ENCODE measurements at regions of chr14 and their contacts with region 1.

Region 1: DNA sequence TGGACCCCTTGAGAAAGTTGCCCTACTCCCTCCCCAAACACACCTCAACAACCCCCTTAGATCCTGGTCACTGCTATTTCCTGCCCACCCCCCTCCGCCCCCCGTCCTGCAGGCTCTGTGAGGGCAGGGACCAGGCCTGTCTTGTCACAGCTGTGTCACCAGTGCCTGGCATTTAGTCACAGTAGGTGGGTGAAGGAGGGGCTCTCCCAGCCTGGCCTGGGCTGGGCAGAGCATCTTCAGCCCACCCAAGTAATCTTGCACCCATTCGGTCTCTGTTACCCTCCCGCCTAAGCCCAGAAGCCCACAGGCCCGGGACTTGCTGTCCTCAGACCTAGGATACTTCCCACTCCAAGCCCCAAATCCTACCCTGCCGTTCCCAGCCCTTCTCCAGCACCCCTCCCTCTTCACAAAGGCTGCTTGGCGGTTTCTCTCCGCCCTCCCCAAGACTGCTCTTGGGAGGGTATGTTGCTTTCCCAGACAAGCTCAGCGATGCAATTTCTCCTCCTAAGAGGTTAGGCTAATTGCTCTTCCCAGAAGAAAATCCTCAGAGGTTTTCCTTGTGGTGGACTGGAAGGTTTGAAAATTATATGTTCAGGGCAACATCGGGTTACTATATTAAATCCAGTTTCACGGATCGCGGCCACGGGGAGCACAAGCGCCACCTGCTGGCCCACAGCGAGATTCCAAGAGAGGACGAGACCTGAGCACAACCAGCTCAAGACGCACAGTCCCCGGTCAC is 50.8 kb upstream of the ZFP36L1 start:
- DNase-seq: peak; percentile 48 to 78 (median 65)
- H3K4me3 ChIP-seq: no peak overlapping the region
- H3K4me3 Mint-ChIP-seq: peak overlapping the region in 5 of 7 donors; percentile 4 to 90 (median 69)
- H3K27ac ChIP-seq: no peak overlapping the region
- H3K27ac Mint-ChIP-seq: peak overlapping the region in 3 of 8 donors; percentile 29 to 83 (median 68)
- H3K4me1 ChIP-seq: peaks cover 9% of the 10 kb centered on the region
- H3K4me1 Mint-ChIP-seq: peaks cover 31 to 40% (median 31%) of the 10 kb centered on the region in 3 donors
- H3K27me3 ChIP-seq: no peaks in the 10 kb centered on the region
- H3K27me3 Mint-ChIP-seq: peaks cover 3 to 8% of the 10 kb centered on the region in 2 donors

Region 2: DNA sequence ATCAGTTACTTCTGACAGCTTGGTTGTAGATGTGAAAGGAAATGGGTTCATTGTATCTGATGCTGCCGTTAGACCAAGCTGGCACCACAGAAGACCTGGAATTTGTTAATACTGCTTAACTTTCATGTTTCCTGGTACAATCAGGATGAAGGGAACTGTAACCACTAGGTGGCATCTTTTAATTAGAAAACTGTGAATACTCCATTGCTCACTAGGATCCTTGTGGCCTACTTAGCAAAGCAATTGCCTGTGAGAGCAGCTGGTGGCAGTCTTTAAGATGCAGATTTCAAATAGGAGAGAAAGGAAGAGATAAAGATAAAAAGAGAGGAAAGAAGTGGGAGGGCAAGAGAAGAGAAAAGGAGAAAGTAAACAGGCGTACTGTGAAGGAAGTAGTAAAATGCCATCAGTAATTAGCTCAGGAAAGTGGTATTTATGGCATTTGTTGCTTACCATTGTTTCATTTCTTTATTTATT is 909.6 kb before region 1 on chr14:
- CTCF ChIA-PET with region 1: interaction called, 10 read pairs
- POLR2A ChIA-PET with region 1: no interaction called
- DNase-seq: peak in 2 of 5 donors; percentile 29 to 33
- H3K4me3 ChIP-seq: no peak overlapping the region
- H3K4me3 Mint-ChIP-seq: no peak overlapping the region
- H3K27ac ChIP-seq: no peak overlapping the region
- H3K27ac Mint-ChIP-seq: peak overlapping the region in 1 of 8 donors; percentile 18
- H3K4me1 ChIP-seq: peaks cover 6% of the 10 kb centered on the region
- H3K4me1 Mint-ChIP-seq: peaks cover 4 to 5% (median 5%) of the 10 kb centered on the region in 3 donors
- H3K27me3 ChIP-seq: no peaks in the 10 kb centered on the region
- H3K27me3 Mint-ChIP-seq: peaks cover 0 to 1% of the 10 kb centered on the region in 2 donors

Region 3: GRCh38 chr14:68248481-68249255 is 595.0 kb before region 1 on chr14:
- CTCF ChIA-PET with region 1: interaction called, 19 read pairs
- POLR2A ChIA-PET with region 1: no interaction called
- DNase-seq: peak in 2 of 5 donors; percentile 39 to 57
- H3K4me3 ChIP-seq: no peak overlapping the region
- H3K4me3 Mint-ChIP-seq: no peak overlapping the region
- H3K27ac ChIP-seq: no peak overlapping the region
- H3K27ac Mint-ChIP-seq: peak overlapping the region in 3 of 8 donors; percentile 15 to 60 (median 52)
- H3K4me1 ChIP-seq: peaks cover 12% of the 10 kb centered on the region
- H3K4me1 Mint-ChIP-seq: peaks cover 8 to 17% (median 14%) of the 10 kb centered on the region in 3 donors
- H3K27me3 ChIP-seq: no peaks in the 10 kb centered on the region
- H3K27me3 Mint-ChIP-seq: no peaks in the 10 kb centered on the region

Region 4: DNA sequence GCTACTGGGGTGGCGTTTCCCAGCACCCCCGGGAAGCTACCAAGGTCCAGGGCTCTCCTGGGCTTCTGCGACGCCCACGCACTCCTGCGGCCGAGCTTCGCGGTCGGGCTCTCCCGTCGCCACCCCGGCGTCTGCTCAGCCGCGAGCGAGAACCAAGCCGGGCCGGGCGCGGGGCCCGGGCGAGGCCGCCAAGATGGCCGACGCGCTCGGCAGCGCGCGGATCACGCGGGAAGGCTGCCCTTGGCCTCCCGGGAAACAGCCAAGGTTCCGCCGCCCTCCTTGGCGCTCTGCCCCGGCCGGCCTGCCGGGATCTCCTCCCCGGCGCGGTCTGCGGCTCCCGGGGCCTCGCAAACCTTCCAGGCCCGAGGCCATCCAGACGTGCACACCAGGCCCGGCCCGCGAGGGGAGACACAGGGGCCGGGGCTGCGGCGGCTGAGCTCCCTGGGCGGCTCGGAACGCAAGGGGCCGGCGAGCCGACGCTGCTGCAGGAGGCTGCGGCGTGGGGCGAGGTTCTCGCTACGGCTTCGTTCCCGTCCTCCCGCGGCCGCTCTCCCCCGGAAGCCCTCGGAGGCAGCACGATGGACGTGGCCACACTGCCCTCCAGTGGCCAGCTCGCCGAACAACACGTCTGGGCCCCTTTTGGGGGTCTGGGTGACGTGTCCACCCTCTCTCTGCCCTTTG is 27.2 kb before region 1 on chr14:
- CTCF ChIA-PET with region 1: interaction called, 23 read pairs
- POLR2A ChIA-PET with region 1: no interaction called
- DNase-seq: peak; percentile 83 to 92 (median 86)
- H3K4me3 ChIP-seq: peak overlapping the region; percentile 79
- H3K4me3 Mint-ChIP-seq: peak overlapping the region; percentile 76 to 94 (median 82)
- H3K27ac ChIP-seq: peak overlapping the region; percentile 86
- H3K27ac Mint-ChIP-seq: peak overlapping the region; percentile 90 to 100 (median 96)
- H3K4me1 ChIP-seq: peaks cover 73% of the 10 kb centered on the region
- H3K4me1 Mint-ChIP-seq: peaks cover 68 to 76% (median 73%) of the 10 kb centered on the region in 3 donors
- H3K27me3 ChIP-seq: no peaks in the 10 kb centered on the region
- H3K27me3 Mint-ChIP-seq: no peaks in the 10 kb centered on the region

Region 5: GRCh38 chr14:68862954-68863594 is 19.4 kb after region 1 on chr14:
- CTCF ChIA-PET with region 1: interaction called, 12 read pairs
- POLR2A ChIA-PET with region 1: no interaction called
- DNase-seq: peak; percentile 27 to 72 (median 41)
- H3K4me3 ChIP-seq: no peak overlapping the region
- H3K4me3 Mint-ChIP-seq: no peak overlapping the region
- H3K27ac ChIP-seq: no peak overlapping the region
- H3K27ac Mint-ChIP-seq: peak overlapping the region in 1 of 8 donors; percentile 47
- H3K4me1 ChIP-seq: no peaks in the 10 kb centered on the region
- H3K4me1 Mint-ChIP-seq: no peaks in the 10 kb centered on the region
- H3K27me3 ChIP-seq: no peaks in the 10 kb centered on the region
- H3K27me3 Mint-ChIP-seq: peaks cover 0 to 3% of the 10 kb centered on the region in 2 donors

Measured in CD8-positive, alpha-beta memory T cell (primary cell).